ENCODE measurements at regions of chr6 and their contacts with region 1.

Region 1: GRCh38 chr6:134174672-134175198 is 122.3 kb upstream of the SLC2A12 start:
- DNase-seq: peak; percentile 93 to 98 (median 96)
- H3K4me3 ChIP-seq: peak overlapping the region; percentile 61 to 98 (median 86)
- H3K27ac ChIP-seq: peak overlapping the region; percentile 88 to 100 (median 99)
- H3K27me3 ChIP-seq: no peaks in the 10 kb centered on the region
- CTCF ChIP-seq: peak in 24 of 56 donors; percentile 6 to 45 (median 26)

Region 2: DNA sequence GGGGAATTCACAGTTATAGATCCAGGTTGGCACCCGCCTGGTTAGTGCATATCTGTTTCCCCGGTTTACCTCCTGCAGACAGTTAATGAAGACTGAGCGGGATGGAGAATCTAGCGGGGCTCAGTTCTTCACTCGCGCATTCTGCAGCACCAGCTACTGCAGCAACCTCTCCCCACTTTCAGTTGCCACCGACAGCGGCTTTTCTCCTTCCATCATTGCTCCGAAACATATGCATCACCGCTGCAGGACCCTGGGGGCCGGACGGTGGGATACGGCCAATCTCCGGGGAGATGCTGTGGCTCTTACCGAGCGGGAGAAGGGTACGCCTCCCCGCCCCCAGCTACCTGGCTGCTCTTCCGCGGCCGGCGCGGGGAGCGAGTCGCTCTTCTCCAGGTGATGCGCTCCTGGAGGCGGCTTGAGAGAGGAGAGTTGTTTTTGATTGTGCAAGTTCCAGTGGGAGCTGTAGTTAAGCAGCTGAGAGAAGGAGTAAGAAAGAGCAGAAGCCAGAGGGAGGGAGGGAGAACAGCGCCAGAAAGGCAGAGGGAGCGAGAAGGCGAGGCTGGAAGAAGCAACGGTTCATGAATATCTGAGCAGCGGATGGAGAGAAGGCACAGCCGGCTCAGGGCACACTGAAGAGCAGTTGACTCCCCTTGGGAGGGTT is 142.9 kb after region 1 on chr6 and contains the start of gene SGK1:
- intact Hi-C with region 1: loop called (anchors 2 kb)
- DNase-seq: peak in 9 of 10 donors; percentile 41 to 70 (median 67)
- H3K4me3 ChIP-seq: peak within 1 kb of the TSS; percentile 57 to 95 (median 79)
- H3K27ac ChIP-seq: peak within 1 kb of the TSS; percentile 87 to 99 (median 96)
- H3K27me3 ChIP-seq: no peaks in the 10 kb centered on the region
- CTCF ChIP-seq: peak in 23 of 56 donors; percentile 5 to 45 (median 23)
- total RNA-seq, gene SGK1: 31.4 to 701 (median 120) TPM

Region 3: GRCh38 chr6:134537146-134537555 is 362.4 kb after region 1 on chr6:
- intact Hi-C with region 1: loop called in 1 of 2 experiments (anchors 10 kb)
- DNase-seq: no peak
- H3K4me3 ChIP-seq: no peak overlapping the region
- H3K27ac ChIP-seq: peak overlapping the region in 31 of 59 donors; percentile 7 to 84 (median 38)
- H3K27me3 ChIP-seq: no peaks in the 10 kb centered on the region
- CTCF ChIP-seq: no peak

Region 4: GRCh38 chr6:134640975-134641429 is 466.3 kb after region 1 on chr6:
- intact Hi-C with region 1: loop called (anchors 2 to 5 kb)
- DNase-seq: peak; percentile 58 to 93 (median 81)
- H3K4me3 ChIP-seq: no peak overlapping the region
- H3K27ac ChIP-seq: peak overlapping the region in 58 of 59 donors; percentile 40 to 91 (median 79)
- H3K27me3 ChIP-seq: no peaks in the 10 kb centered on the region
- CTCF ChIP-seq: peak; percentile 81 to 98 (median 94)

Region 5: DNA sequence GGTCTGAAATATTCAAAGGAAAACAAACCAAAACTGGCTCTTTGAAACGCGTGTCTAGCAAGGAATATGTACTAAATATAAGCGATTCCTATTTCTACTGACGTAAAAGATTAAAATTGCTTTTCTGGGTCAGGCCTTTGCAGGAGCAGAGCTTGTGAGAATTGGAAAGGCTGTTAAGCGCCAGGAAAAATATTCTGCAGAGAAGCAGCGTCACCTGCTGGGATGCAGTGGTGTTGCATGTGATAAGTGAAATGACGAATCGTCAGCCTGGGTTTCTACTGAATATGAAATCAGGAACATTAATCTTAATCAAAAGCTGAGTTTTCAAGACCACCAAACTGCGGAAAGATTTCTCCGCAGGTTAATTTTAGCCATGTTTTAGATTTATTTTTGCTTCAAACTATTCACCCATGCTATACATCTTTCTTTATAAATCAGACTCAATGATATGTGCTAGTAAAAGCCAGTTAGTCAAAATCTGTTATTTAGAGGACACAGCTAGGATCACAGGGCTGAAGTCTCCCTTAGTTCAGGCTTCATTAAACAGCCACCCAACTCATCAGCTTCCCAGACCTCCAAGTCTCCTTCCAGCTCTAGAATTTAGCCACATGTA is 707.8 kb after region 1 on chr6:
- intact Hi-C with region 1: loop called (anchors 5 kb)
- DNase-seq: peak; percentile 65 to 82 (median 74)
- H3K4me3 ChIP-seq: peak overlapping the region in 9 of 59 donors; percentile 0 to 27 (median 15)
- H3K27ac ChIP-seq: peak overlapping the region in 51 of 59 donors; percentile 15 to 88 (median 68)
- H3K27me3 ChIP-seq: no peaks in the 10 kb centered on the region
- CTCF ChIP-seq: peak; percentile 53 to 100 (median 96)

Measured in dorsolateral prefrontal cortex (tissue), 120 donors.